Endothelial cell of umbilical vein (primary cell): ENCODE measurements at regions of chr1 and their contacts with region 1.

Region 1: DNA sequence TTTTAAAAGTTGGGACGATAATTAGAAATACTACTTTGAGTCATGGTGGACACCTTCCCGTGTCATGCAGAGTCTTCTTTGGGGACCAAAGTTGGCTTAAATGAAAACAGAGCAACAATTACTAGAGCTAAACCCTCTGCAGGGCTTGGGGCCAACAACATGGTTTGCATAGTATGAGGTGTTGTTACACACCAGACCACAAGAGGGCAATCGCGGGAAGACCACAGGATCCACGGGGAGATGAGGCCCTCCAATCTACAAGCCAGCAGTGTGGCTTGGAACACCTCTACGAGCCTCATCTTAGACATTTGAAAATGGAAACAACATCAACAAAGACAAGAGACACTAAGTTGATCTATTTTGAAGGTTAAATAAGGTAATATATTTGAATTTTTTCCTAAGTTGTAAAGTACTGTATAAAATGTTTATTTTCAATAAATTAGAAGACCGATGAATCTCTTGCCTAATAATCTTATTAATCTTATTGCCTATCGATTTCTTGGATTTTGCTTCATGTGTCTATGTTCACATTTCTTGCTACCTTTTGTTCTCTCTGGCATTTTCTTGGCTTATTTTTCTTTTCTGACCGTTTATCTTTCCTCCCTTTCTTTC is 8.2 kb upstream of the SMCP start:
- DNase-seq: peak; percentile 71
- H3K4me3 ChIP-seq: no peak overlapping the region
- H3K27ac ChIP-seq: no peak overlapping the region
- H3K4me1 ChIP-seq: no peaks in the 10 kb centered on the region
- H3K27me3 ChIP-seq: no peaks in the 10 kb centered on the region
- CTCF ChIP-seq: peak; percentile 80 to 82
- POLR2A ChIP-seq: no peak

Region 2: GRCh38 chr1:153192697-153193096 is 322.8 kb after region 1 on chr1:
- CTCF ChIA-PET with region 1: interaction called, 38 read pairs
- POLR2A ChIA-PET with region 1: no interaction called
- dilution Hi-C with region 1: no loop called
- intact Hi-C with region 1: loop called (anchors 1 kb)
- DNase-seq: no peak
- H3K4me3 ChIP-seq: no peak overlapping the region
- H3K27ac ChIP-seq: no peak overlapping the region
- H3K4me1 ChIP-seq: no peaks in the 10 kb centered on the region
- H3K27me3 ChIP-seq: no peaks in the 10 kb centered on the region
- CTCF ChIP-seq: peak; percentile 7 to 16
- POLR2A ChIP-seq: no peak

Region 3: GRCh38 chr1:153220606-153221303 is 350.8 kb after region 1 on chr1:
- CTCF ChIA-PET with region 1: interaction called, 9 read pairs
- POLR2A ChIA-PET with region 1: no interaction called
- dilution Hi-C with region 1: no loop called
- intact Hi-C with region 1: loop called (anchors 1 kb)
- DNase-seq: no peak
- H3K4me3 ChIP-seq: no peak overlapping the region
- H3K27ac ChIP-seq: no peak overlapping the region
- H3K4me1 ChIP-seq: no peaks in the 10 kb centered on the region
- H3K27me3 ChIP-seq: no peaks in the 10 kb centered on the region
- CTCF ChIP-seq: no peak
- POLR2A ChIP-seq: no peak